A549 (cell line): ENCODE measurements at regions of chr6 and their contacts with region 1.

Region 1: GRCh38 chr6:33700391-33701050 is 11.0 kb downstream of the UQCC2 start:
- DNase-seq: peak; percentile 57 to 77
- ATAC-seq: peak; percentile 82 to 90
- H3K4me3 ChIP-seq: no peak overlapping the region
- H3K27ac ChIP-seq: peak overlapping the region in 1 of 2 experiments; percentile 46; a peak in 1 of 6 replicates
- H3K4me1 ChIP-seq: peaks cover 15% of the 10 kb centered on the region
- CTCF ChIP-seq: peak; percentile 67
- EP300 ChIP-seq: no peak
- POLR2A ChIP-seq: no peak
- RAD21 ChIP-seq: peak; percentile 62 to 65

Region 2: GRCh38 chr6:33599413-33599911 is 101.1 kb before region 1 on chr6:
- CTCF ChIA-PET with region 1: interaction called, 10 read pairs
- POLR2A ChIA-PET with region 1: no interaction called
- DNase-seq: peak in 1 of 2 experiments; percentile 20
- ATAC-seq: peak; percentile 71 to 75
- H3K4me3 ChIP-seq: no peak overlapping the region
- H3K27ac ChIP-seq: peak overlapping the region; percentile 65 to 71
- H3K4me1 ChIP-seq: peaks cover 23% of the 10 kb centered on the region
- CTCF ChIP-seq: no peak
- EP300 ChIP-seq: no peak
- POLR2A ChIP-seq: no peak
- RAD21 ChIP-seq: no peak

Region 3: GRCh38 chr6:33672808-33673207 is 27.7 kb before region 1 on chr6:
- CTCF ChIA-PET with region 1: interaction called, 16 read pairs
- POLR2A ChIA-PET with region 1: no interaction called
- DNase-seq: peak; percentile 78 to 85
- ATAC-seq: peak; percentile 85 to 90
- H3K4me3 ChIP-seq: no peak overlapping the region
- H3K27ac ChIP-seq: peak overlapping the region; percentile 73 to 92
- H3K4me1 ChIP-seq: peaks cover 78% of the 10 kb centered on the region
- CTCF ChIP-seq: peak; percentile 38; the same call in 2 of the 3 replicates
- EP300 ChIP-seq: no peak
- POLR2A ChIP-seq: no peak
- RAD21 ChIP-seq: peak; percentile 49 to 60

Region 4: GRCh38 chr6:33688451-33689147 is 11.9 kb before region 1 on chr6:
- CTCF ChIA-PET with region 1: interaction called, 19 read pairs
- POLR2A ChIA-PET with region 1: no interaction called
- DNase-seq: no peak
- ATAC-seq: no peak
- H3K4me3 ChIP-seq: no peak overlapping the region
- H3K27ac ChIP-seq: no peak overlapping the region
- H3K4me1 ChIP-seq: no peaks in the 10 kb centered on the region; the same call in 2 of the 3 replicates
- CTCF ChIP-seq: no peak
- EP300 ChIP-seq: no peak
- POLR2A ChIP-seq: no peak
- RAD21 ChIP-seq: no peak

Region 5: GRCh38 chr6:33761922-33762629 is 61.6 kb after region 1 on chr6:
- CTCF ChIA-PET with region 1: interaction called, 10 read pairs
- POLR2A ChIA-PET with region 1: no interaction called
- DNase-seq: peak; percentile 40 to 59
- ATAC-seq: peak; percentile 86 to 93
- H3K4me3 ChIP-seq: no peak overlapping the region
- H3K27ac ChIP-seq: peak overlapping the region; percentile 63 to 65; a peak in 4 of 6 replicates
- H3K4me1 ChIP-seq: peaks cover 27% of the 10 kb centered on the region
- CTCF ChIP-seq: peak; percentile 64
- EP300 ChIP-seq: no peak
- POLR2A ChIP-seq: no peak
- RAD21 ChIP-seq: peak; percentile 69 to 77

Region 6: DNA sequence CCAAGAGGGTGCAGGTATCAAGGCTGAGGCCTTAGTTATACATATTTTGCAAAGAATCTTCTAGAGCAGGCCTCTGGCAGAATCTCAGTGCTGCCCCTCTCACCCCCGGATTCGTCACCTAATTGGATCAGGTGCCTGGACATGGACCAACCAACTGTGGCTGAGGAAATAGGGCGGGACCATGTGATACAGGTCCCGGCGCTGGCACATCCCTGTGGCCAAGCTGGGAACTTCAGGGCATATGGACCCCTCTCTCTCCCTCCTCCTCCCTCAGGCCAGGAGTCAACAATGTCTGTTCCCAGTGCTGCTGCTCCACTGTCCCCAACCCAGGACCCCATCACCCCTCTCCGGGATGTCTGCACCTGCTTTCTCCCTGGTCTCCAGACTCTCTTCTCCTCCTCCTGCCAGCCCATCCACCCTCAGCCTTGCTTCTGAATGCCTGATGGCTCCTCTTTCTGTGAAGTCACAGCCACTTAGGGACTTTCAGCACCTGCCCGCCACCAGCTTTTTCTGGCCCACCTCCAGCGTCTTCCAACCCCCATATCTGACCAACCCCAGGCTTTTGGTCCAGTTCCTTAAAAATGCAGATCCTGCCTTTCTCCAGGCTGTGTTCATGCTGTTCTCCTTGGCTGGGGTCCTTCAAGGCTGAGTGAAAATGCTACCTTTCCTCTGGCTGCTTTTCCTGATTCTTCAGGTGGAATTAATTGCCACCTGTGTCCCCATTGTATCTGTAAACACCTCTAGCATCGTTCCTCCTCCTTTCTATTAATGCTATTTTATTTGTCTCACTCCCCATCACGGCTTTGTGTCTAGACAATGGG is 122.3 kb after region 1 on chr6:
- CTCF ChIA-PET with region 1: no interaction called
- POLR2A ChIA-PET with region 1: no interaction called
- DNase-seq: peak; percentile 54 to 72
- ATAC-seq: peak; percentile 67 to 93; a peak in 4 of 6 replicates
- H3K4me3 ChIP-seq: no peak overlapping the region
- H3K27ac ChIP-seq: no peak overlapping the region
- H3K4me1 ChIP-seq: no peaks in the 10 kb centered on the region
- CTCF ChIP-seq: no peak
- EP300 ChIP-seq: no peak
- POLR2A ChIP-seq: no peak
- RAD21 ChIP-seq: no peak